Left colon (tissue), 2 donors: ENCODE measurements at regions of chr18 and their contacts with region 1.

Region 1: GRCh38 chr18:58128381-58129374 is 84.7 kb downstream of the NEDD4L start:
- DNase-seq: peak; percentile 62 to 64
- ATAC-seq: peak; percentile 97

Region 2: DNA sequence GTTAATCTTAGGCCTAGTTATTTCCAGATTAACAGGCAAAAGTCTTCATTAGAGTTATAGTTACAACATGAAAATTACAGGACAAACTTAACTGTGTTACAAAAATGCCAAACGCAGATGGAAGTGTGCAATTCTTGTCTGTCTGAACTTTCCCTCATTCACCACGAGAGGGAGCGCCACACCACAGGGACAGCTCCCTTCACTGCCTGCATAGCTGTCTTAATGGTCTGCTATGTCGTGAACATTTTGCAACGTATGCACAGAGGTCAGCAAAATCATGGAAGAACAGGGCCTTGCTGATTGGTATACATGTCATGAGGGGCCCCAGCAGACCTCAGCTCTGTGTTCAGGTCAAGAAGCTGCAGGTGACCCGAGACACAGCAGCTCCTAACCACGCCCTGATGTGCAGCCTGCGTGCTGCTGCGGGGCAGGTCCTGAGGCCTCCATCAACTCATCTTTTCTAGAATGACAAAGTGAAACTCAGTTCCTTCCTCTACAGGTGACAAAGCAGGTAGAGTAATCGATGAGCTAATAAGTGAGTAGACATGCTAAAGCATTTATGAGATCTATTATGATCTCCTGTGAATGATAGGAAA is 246.8 kb before region 1 on chr18:
- intact Hi-C with region 1: loop called in 1 of 2 experiments (anchors 10 kb)
- DNase-seq: peak; percentile 49 to 54
- ATAC-seq: peak; percentile 98

Region 3: GRCh38 chr18:57965246-57965645 is 163.4 kb before region 1 on chr18:
- intact Hi-C with region 1: loop called in 1 of 2 experiments (anchors 10 kb)
- DNase-seq: peak in 1 of 2 donors; percentile 43
- ATAC-seq: peak; percentile 96

Region 4: DNA sequence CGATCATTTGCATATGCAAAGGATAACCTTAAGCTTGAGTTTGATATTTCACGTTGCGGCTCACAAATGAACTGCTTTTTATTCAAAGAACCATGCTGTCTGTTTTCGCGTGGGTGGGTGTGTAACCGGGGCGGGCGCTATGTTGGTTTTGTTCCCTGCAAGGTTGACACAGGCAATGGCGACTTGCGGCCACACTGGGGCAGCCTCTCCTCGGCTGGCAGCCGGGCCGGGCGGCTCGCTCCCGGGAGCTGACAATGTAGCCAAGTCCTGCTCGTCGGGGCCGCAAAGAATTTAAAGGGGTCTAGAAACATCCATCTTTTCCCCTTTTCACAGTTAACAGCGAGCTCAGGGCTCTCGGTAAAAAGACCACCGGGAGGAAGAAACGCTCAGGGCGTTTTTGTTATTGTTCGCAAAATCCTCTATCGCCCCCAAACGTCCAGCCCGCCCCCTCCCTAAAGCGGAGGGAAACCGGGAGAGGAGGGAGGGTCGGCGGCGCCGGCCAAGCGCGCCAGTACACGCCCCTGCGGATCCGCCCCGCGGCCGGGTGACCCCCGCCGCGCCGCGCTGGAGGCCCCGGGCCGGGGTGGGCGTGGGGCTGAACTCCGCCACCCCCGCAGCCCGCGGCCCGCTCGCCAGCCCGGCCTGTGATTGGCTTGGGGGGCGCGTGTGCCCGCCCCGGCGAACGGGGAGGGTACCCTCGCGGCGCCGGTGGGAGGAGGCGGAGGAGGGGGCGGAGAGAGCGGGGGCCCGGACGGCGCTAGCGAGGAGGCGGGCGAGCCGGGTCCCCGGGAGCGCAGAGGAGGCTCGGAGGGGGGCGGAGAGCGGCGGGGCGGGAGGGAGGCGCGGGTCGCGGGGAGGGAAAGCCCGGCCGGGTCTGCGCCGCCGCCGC is 84.9 kb before region 1 on chr18 and contains the start of gene NEDD4L:
- intact Hi-C with region 1: loop called (anchors 5 to 10 kb)
- DNase-seq: peak; percentile 88 to 89
- ATAC-seq: peak; percentile 73
- total RNA-seq, gene NEDD4L: 176 to 332 TPM

Region 5: GRCh38 chr18:58057291-58057965 is 71.2 kb before region 1 on chr18:
- intact Hi-C with region 1: loop called in 1 of 2 experiments (anchors 5 kb)
- DNase-seq: no peak
- ATAC-seq: no peak